ENCODE measurements at regions of chr10 and their contacts with region 1.

Region 1: DNA sequence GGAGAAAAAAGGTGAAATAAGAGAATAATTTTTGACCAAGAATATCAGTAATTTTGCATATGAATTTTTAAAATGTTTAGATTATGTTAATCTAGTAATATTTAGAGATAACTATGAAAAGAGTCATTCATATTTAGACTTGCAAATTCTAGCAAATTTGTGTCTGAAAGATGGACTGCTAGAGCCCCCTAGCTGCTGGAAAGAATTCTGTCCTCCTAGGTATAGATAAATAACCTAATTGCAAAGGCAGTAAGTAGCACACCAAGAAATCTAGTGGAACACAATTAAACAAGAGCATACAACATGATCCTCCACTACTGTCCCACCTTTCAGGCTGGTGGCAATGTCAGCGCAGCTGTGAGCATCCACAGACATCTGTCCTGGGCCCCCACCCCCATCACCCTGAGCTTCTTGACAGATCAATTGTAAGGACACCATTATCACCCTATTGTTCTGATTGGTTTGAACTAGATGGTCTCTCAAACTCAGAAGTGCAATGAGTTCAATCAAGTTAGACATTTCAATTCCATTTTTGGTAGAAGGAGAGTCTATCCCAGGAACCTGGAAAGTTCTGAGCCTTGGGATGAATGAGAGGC is 15.0 kb upstream of the GFRA1 start:
- DNase-seq: no peak
- H3K4me3 ChIP-seq: no peak overlapping the region
- H3K27ac ChIP-seq: no peak overlapping the region
- H3K4me1 ChIP-seq: no peaks in the 10 kb centered on the region
- H3K27me3 ChIP-seq: no peaks in the 10 kb centered on the region
- CTCF ChIP-seq: peak; percentile 35 to 64 (median 63)
- POLR2A ChIP-seq: no peak

Region 2: GRCh38 chr10:115795964-115796363 is 492.0 kb before region 1 on chr10:
- intact Hi-C with region 1: loop called (anchors 5 kb)
- DNase-seq: no peak
- H3K4me3 ChIP-seq: no peak overlapping the region
- H3K27ac ChIP-seq: no peak overlapping the region
- H3K4me1 ChIP-seq: no peaks in the 10 kb centered on the region
- H3K27me3 ChIP-seq: no peaks in the 10 kb centered on the region
- CTCF ChIP-seq: no peak
- POLR2A ChIP-seq: no peak

Region 3: GRCh38 chr10:116826803-116827202 is 538.8 kb after region 1 on chr10:
- intact Hi-C with region 1: no loop called
- DNase-seq: peak in 1 of 2 donors; percentile 22
- H3K4me3 ChIP-seq: no peak overlapping the region
- H3K27ac ChIP-seq: no peak overlapping the region
- H3K4me1 ChIP-seq: no peaks in the 10 kb centered on the region
- H3K27me3 ChIP-seq: no peaks in the 10 kb centered on the region
- CTCF ChIP-seq: no peak
- POLR2A ChIP-seq: no peak

Measured in vagina (tissue), 2 donors.